CD8-positive, alpha-beta T cell (primary cell): ENCODE measurements at regions of chr1 and their contacts with region 1.

Region 1: DNA sequence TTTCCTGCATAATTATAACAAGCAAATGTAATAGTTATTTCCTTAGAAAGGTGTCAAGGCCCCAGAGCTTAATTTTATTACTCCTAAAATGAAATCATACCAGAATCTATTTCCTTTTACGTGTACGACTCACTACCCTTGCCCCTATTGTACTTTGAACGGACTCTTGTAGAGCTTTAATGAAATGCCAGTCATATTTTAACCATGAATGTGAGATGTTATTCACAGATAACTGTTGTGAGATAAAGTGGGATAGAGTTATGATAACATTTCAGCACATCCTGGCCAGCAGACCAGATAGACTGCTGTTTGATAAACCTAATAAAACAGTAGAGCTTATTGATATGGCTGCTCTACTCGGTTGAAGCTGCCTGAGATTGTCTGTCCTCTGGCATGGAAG is 500.8 kb upstream of the PBX1 start:
- DNase-seq: no peak
- ATAC-seq: no peak
- H3K4me3 ChIP-seq: no peak overlapping the region
- H3K4me3 Mint-ChIP-seq: no peak overlapping the region
- H3K27ac ChIP-seq: no peak overlapping the region
- H3K27ac Mint-ChIP-seq: no peak overlapping the region
- H3K4me1 ChIP-seq: no peaks in the 10 kb centered on the region
- H3K4me1 Mint-ChIP-seq: no peaks in the 10 kb centered on the region
- H3K27me3 ChIP-seq: no peaks in the 10 kb centered on the region
- H3K27me3 Mint-ChIP-seq: no peaks in the 10 kb centered on the region
- CTCF ChIP-seq: no peak

Region 2: DNA sequence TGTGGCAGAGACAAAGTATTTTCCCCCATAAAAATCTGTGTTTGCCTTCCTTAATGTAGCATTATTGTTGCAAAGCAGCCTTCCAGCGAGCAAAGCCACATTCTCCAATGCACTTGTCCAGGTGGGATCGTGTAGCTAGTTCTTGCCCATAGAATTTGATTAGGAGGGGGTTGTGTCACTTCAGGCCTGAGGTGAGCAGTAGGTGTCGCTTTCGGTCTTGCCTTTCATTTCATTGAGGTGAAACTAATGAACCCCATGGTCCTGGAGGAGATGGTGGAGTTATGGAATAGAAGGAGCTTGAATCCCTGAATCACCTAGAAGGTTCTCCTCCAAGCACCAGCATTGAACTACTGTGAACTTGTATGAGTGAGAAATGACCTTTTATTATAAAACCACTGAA is 181.9 kb after region 1 on chr1:
- CTCF ChIA-PET with region 1: no interaction called
- POLR2A ChIA-PET with region 1: no interaction called
- intact Hi-C with region 1: loop called in 1 of 2 experiments (anchors 10 kb)
- DNase-seq: no peak
- ATAC-seq: no peak
- H3K4me3 ChIP-seq: no peak overlapping the region
- H3K4me3 Mint-ChIP-seq: no peak overlapping the region
- H3K27ac ChIP-seq: no peak overlapping the region
- H3K27ac Mint-ChIP-seq: no peak overlapping the region
- H3K4me1 ChIP-seq: no peaks in the 10 kb centered on the region
- H3K4me1 Mint-ChIP-seq: no peaks in the 10 kb centered on the region
- H3K27me3 ChIP-seq: no peaks in the 10 kb centered on the region
- H3K27me3 Mint-ChIP-seq: no peaks in the 10 kb centered on the region
- CTCF ChIP-seq: no peak

Region 3: GRCh38 chr1:164953098-164953497 is 894.9 kb after region 1 on chr1:
- CTCF ChIA-PET with region 1: no interaction called
- POLR2A ChIA-PET with region 1: no interaction called
- intact Hi-C with region 1: no loop called
- DNase-seq: no peak
- ATAC-seq: no peak
- H3K4me3 ChIP-seq: no peak overlapping the region
- H3K4me3 Mint-ChIP-seq: no peak overlapping the region
- H3K27ac ChIP-seq: no peak overlapping the region
- H3K27ac Mint-ChIP-seq: no peak overlapping the region
- H3K4me1 ChIP-seq: no peaks in the 10 kb centered on the region
- H3K4me1 Mint-ChIP-seq: no peaks in the 10 kb centered on the region
- H3K27me3 ChIP-seq: no peaks in the 10 kb centered on the region
- H3K27me3 Mint-ChIP-seq: peaks cover 6% of the 10 kb centered on the region
- CTCF ChIP-seq: no peak

Region 4: GRCh38 chr1:165768513-165769394 is 1710.6 kb after region 1 on chr1 and contains the start of gene TMCO1:
- CTCF ChIA-PET with region 1: no interaction called
- POLR2A ChIA-PET with region 1: no interaction called
- intact Hi-C with region 1: no loop called
- DNase-seq: peak; percentile 84 to 99 (median 92)
- ATAC-seq: peak; percentile 93
- H3K4me3 ChIP-seq: peak within 1 kb of the TSS; percentile 85 to 93
- H3K4me3 Mint-ChIP-seq: peak within 1 kb of the TSS; percentile 99
- H3K27ac ChIP-seq: peak within 1 kb of the TSS; percentile 71 to 96
- H3K27ac Mint-ChIP-seq: peak within 1 kb of the TSS; percentile 99
- H3K4me1 ChIP-seq: peaks cover 50% of the 10 kb centered on the region
- H3K4me1 Mint-ChIP-seq: peaks cover 65% of the 10 kb centered on the region
- H3K27me3 ChIP-seq: no peaks in the 10 kb centered on the region
- H3K27me3 Mint-ChIP-seq: no peaks in the 10 kb centered on the region
- CTCF ChIP-seq: peak; percentile 24
- total RNA-seq, gene TMCO1: 30.5 to 33.5 TPM